WTC11 (cell line): ENCODE measurements at regions of chr10 and their contacts with region 1.

Region 1: GRCh38 chr10:21510241-21511074 is 15.0 kb downstream of the SKIDA1 start:
- DNase-seq: peak; percentile 64
- ATAC-seq: peak; percentile 13
- H3K4me3 Mint-ChIP-seq: peak overlapping the region; percentile 86
- H3K27ac Mint-ChIP-seq: peak overlapping the region; percentile 98
- H3K4me1 Mint-ChIP-seq: peaks cover 80% of the 10 kb centered on the region
- H3K27me3 Mint-ChIP-seq: peaks cover 30% of the 10 kb centered on the region
- CTCF ChIP-seq: no peak

Region 2: GRCh38 chr10:21278491-21279239 is 231.8 kb before region 1 on chr10:
- CTCF ChIA-PET with region 1: interaction called, 12 read pairs
- POLR2A ChIA-PET with region 1: interaction called, 8 read pairs
- DNase-seq: peak; percentile 98
- ATAC-seq: peak; percentile 80
- H3K4me3 Mint-ChIP-seq: no peak overlapping the region
- H3K27ac Mint-ChIP-seq: peak overlapping the region; percentile 49; the same call in 1 of the 2 replicates
- H3K4me1 Mint-ChIP-seq: peaks cover 49% of the 10 kb centered on the region
- H3K27me3 Mint-ChIP-seq: no peaks in the 10 kb centered on the region
- CTCF ChIP-seq: peak; percentile 97

Region 3: DNA sequence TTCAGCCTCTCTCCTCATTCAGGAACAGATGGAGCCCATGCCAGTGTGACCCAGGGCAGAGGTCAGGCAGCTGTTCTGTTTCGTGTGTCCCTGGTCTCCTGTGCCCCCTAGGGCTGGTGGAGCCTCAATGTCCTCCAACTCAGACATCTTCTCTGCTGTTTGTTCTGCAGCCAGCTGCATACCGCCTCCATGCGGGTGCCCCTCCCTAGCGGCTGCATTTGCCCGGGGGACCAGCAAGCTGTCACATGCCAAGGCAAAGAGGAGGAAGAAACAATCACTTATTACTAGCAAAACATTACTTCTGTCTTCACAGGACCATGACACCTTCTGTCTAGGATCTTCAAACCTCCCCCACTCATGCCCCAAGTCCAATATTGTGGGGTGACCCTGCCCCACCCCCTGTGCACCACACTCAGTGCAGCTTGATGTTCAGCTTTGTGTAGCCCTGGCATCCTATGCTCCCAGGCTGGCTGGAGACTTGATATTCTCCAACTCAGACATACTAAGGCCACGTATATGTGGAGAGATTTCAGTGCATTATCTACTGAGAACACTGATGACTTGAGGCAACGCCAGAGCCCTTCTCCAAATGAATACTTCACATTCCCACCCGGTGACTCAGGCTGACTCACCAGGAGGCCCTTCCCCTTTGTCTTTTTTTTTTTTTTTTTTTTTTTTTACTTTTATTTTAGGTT is 173.8 kb before region 1 on chr10:
- CTCF ChIA-PET with region 1: no interaction called
- POLR2A ChIA-PET with region 1: interaction called, 10 read pairs
- DNase-seq: peak; percentile 25
- ATAC-seq: peak; percentile 85
- H3K4me3 Mint-ChIP-seq: no peak overlapping the region
- H3K27ac Mint-ChIP-seq: peak overlapping the region; percentile 97
- H3K4me1 Mint-ChIP-seq: peaks cover 30% of the 10 kb centered on the region
- H3K27me3 Mint-ChIP-seq: no peaks in the 10 kb centered on the region
- CTCF ChIP-seq: no peak

Region 4: GRCh38 chr10:21464143-21464533 is 46.3 kb before region 1 on chr10:
- CTCF ChIA-PET with region 1: no interaction called
- POLR2A ChIA-PET with region 1: no interaction called
- DNase-seq: no peak
- ATAC-seq: no peak
- H3K4me3 Mint-ChIP-seq: no peak overlapping the region
- H3K27ac Mint-ChIP-seq: no peak overlapping the region
- H3K4me1 Mint-ChIP-seq: no peaks in the 10 kb centered on the region
- H3K27me3 Mint-ChIP-seq: no peaks in the 10 kb centered on the region
- CTCF ChIP-seq: no peak

Region 5: GRCh38 chr10:21495752-21496342 is 14.6 kb before region 1 on chr10:
- CTCF ChIA-PET with region 1: interaction called, 84 read pairs
- POLR2A ChIA-PET with region 1: interaction called, 103 read pairs
- DNase-seq: peak; percentile 94
- ATAC-seq: peak; percentile 53
- H3K4me3 Mint-ChIP-seq: peak overlapping the region; percentile 82
- H3K27ac Mint-ChIP-seq: peak overlapping the region; percentile 91
- H3K4me1 Mint-ChIP-seq: peaks cover 59% of the 10 kb centered on the region
- H3K27me3 Mint-ChIP-seq: peaks cover 37% of the 10 kb centered on the region
- CTCF ChIP-seq: peak; percentile 99

Region 6: DNA sequence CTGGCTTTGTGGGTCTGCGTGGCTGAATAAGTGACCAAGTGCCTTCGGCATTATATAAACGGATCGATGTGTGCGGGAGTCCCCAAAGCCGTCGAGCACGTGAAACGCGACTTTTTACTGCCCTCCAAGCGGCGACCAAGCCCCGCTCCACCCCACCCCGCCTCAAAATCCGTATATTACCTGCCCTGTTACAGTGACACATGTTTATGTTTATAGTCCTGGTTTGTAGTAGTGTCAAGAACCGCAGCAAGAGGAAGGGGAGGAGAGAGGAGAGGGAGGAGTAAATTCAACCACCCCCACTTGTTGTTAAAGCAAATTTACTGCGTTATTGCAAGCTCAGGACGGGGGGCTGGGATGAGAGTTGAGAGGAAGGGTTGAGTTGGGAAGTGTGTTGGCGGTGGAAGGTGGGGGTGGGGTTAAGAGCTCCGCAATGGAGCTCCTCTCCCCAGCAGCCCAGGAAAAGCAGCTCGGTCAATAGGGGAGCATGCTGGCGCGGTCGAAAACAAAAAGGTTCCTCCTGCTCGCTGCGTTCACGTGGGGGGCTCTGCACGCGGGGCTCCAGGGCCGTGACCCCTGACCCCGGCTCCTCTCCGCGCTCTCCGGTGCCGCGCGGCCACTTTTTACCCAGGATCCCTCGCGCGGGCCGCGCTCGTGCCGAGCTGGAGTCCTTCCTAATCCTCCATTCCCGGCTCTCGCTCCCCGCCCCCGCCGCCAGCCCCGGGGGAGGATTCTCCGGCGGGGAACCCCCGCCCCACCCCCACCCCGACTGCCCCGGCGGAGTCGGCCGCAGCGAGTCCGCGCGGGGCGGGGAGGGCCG is 15.1 kb after region 1 on chr10 and contains the start of gene SKIDA1:
- CTCF ChIA-PET with region 1: interaction called, 10 read pairs
- POLR2A ChIA-PET with region 1: interaction called, 155 read pairs
- DNase-seq: peak; percentile 88
- ATAC-seq: peak; percentile 66
- H3K4me3 Mint-ChIP-seq: peak within 1 kb of the TSS; percentile 86
- H3K27ac Mint-ChIP-seq: peak within 1 kb of the TSS; percentile 99
- H3K4me1 Mint-ChIP-seq: peaks cover 53% of the 10 kb centered on the region
- H3K27me3 Mint-ChIP-seq: peaks cover 2% of the 10 kb centered on the region; the same call in 1 of the 2 replicates
- CTCF ChIP-seq: no peak
- total RNA-seq, gene SKIDA1: 9.4 to 12.9 TPM (median 11.8 TPM) in 3 replicates

Region 7: GRCh38 chr10:21751341-21752310 is 241.2 kb after region 1 on chr10:
- CTCF ChIA-PET with region 1: no interaction called
- POLR2A ChIA-PET with region 1: interaction called, 22 read pairs
- DNase-seq: peak; percentile 65
- ATAC-seq: peak; percentile 71
- H3K4me3 Mint-ChIP-seq: peak overlapping the region; percentile 28
- H3K27ac Mint-ChIP-seq: peak overlapping the region; percentile 96
- H3K4me1 Mint-ChIP-seq: peaks cover 82% of the 10 kb centered on the region
- H3K27me3 Mint-ChIP-seq: no peaks in the 10 kb centered on the region
- CTCF ChIP-seq: no peak